ENCODE measurements at regions of chr10 and their contacts with region 1.

Region 1: DNA sequence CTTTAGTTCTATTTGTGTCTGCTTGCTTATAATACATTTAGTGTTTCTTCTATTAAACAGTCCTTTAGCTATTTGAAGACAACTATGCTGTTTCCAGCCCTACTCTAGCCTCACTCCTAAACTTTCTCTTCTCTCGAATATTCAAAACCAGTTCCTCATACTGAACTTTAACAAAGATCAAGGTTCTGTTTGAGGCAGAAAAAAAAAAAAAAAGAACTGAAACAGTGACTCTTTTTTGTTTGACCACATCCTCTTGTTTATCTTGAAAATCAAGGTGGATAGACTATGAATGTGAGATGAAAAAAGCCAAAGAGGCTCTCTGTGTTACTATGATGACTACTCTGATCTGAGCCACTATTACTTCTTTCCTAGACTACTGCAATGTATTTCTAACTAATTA is 154.3 kb downstream of the ZNF365 start:
- DNase-seq: no peak
- ATAC-seq: peak; percentile 59
- H3K4me3 Mint-ChIP-seq: peak overlapping the region; percentile 64
- H3K27ac Mint-ChIP-seq: peak overlapping the region; percentile 92
- H3K4me1 Mint-ChIP-seq: peaks cover 58% of the 10 kb centered on the region
- H3K27me3 Mint-ChIP-seq: no peaks in the 10 kb centered on the region
- CTCF ChIP-seq: no peak

Region 2: GRCh38 chr10:61894133-61894532 is 634.3 kb before region 1 on chr10:
- CTCF ChIA-PET with region 1: no interaction called
- POLR2A ChIA-PET with region 1: no interaction called
- intact Hi-C with region 1: no loop called
- DNase-seq: no peak
- ATAC-seq: no peak
- H3K4me3 Mint-ChIP-seq: no peak overlapping the region
- H3K27ac Mint-ChIP-seq: no peak overlapping the region
- H3K4me1 Mint-ChIP-seq: peaks cover 29% of the 10 kb centered on the region
- H3K27me3 Mint-ChIP-seq: no peaks in the 10 kb centered on the region
- CTCF ChIP-seq: no peak

Region 3: GRCh38 chr10:62016623-62017490 is 511.6 kb before region 1 on chr10:
- CTCF ChIA-PET with region 1: no interaction called
- POLR2A ChIA-PET with region 1: no interaction called
- intact Hi-C with region 1: loop called (anchors 5 kb)
- DNase-seq: peak; percentile 40
- ATAC-seq: peak; percentile 65
- H3K4me3 Mint-ChIP-seq: peak overlapping the region; percentile 66
- H3K27ac Mint-ChIP-seq: peak overlapping the region; percentile 96
- H3K4me1 Mint-ChIP-seq: peaks cover 84% of the 10 kb centered on the region
- H3K27me3 Mint-ChIP-seq: no peaks in the 10 kb centered on the region
- CTCF ChIP-seq: no peak

Region 4: DNA sequence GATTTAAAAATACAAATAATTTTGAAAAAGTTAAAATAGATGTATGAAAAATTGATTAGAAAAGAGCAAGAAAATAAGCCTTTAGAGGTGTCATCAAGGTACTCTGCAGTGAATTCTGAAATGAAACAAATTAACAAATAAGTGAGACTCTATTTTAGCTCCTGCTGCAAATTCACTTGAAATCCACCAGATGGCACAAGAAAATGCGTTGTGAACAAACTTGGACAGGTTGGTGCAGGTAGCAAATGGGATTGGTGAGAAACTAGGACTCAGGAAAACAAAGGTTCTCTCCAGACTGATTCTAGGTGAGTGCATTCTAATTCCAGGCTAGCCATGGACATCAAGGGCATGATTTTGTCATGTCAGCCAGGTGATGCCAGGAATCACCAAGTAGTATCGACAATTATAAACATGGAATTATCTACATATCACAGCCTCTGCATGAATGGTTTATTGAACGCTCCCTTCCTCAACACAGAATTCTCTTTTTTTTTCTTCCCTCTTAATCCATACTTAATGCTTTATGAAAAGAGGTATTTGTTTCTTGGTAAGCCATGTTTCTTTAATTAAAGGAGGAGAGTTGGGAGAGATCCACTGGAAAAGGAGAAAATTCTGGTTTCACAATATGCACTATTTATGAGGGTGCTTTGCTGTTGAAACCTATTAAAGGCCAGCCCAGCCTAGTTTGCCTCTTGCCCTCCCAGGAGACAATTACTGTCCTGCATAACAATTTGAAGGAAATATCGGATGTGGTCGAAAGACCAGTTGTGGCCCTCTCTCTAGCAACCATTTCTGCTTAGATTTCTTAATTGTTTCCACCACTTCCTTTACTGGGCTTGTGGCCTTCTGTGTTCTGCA is 36.2 kb before region 1 on chr10:
- CTCF ChIA-PET with region 1: interaction called, 10 read pairs
- POLR2A ChIA-PET with region 1: interaction called, 4 read pairs
- intact Hi-C with region 1: loop called (anchors 1 kb)
- DNase-seq: no peak
- ATAC-seq: peak; percentile 49
- H3K4me3 Mint-ChIP-seq: no peak overlapping the region
- H3K27ac Mint-ChIP-seq: no peak overlapping the region
- H3K4me1 Mint-ChIP-seq: peaks cover 27% of the 10 kb centered on the region
- H3K27me3 Mint-ChIP-seq: peaks cover 4% of the 10 kb centered on the region
- CTCF ChIP-seq: no peak

Region 5: DNA sequence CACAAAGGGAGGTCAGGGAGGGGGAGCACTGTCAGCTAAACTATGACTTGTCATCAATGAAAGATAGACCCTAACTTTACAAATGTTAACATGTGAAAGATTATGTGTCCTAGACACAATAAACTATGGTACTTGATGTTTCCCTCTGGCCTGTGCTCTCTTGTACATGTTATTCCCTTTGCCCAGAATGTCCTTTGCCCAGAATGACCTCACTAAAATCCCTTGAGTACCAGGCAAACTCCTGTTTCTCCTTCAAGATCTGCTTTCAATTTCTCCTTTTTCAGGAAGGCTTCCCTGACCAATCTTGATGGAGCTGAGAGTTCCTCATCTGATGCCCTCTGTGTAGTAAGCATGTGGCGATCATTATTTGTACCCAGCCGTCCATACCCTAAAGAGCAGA is 11.2 kb before region 1 on chr10:
- CTCF ChIA-PET with region 1: no interaction called
- POLR2A ChIA-PET with region 1: no interaction called
- intact Hi-C with region 1: loop called (anchors 1 kb)
- DNase-seq: no peak
- ATAC-seq: no peak
- H3K4me3 Mint-ChIP-seq: no peak overlapping the region
- H3K27ac Mint-ChIP-seq: no peak overlapping the region
- H3K4me1 Mint-ChIP-seq: peaks cover 9% of the 10 kb centered on the region
- H3K27me3 Mint-ChIP-seq: peaks cover 2% of the 10 kb centered on the region
- CTCF ChIP-seq: no peak

Region 6: GRCh38 chr10:62594093-62594520 is 65.7 kb after region 1 on chr10:
- CTCF ChIA-PET with region 1: interaction called, 5 read pairs
- POLR2A ChIA-PET with region 1: no interaction called
- intact Hi-C with region 1: loop called (anchors 5 kb)
- DNase-seq: peak; percentile 41
- ATAC-seq: peak; percentile 88
- H3K4me3 Mint-ChIP-seq: no peak overlapping the region
- H3K27ac Mint-ChIP-seq: no peak overlapping the region
- H3K4me1 Mint-ChIP-seq: peaks cover 16% of the 10 kb centered on the region
- H3K27me3 Mint-ChIP-seq: no peaks in the 10 kb centered on the region
- CTCF ChIP-seq: peak; percentile 74

Region 7: DNA sequence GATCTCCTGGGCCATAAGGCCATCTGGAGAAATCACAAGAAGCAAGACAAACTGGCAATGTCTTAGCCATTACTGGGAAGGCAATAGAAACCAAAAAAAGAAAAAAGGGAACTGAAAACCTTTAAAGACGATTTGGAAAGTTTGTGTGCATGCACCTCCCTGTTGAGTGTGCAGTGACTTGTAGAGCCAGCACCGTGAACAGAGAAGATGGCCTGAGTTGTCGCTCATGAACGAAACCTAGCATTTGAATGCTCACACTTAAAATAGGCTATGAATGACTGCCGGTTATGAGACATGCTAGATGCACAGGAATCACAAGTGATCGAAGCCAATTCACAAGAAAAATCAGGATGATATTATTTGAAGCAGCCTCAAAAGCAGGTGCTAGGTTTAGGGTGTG is 124.8 kb after region 1 on chr10:
- CTCF ChIA-PET with region 1: no interaction called
- POLR2A ChIA-PET with region 1: no interaction called
- intact Hi-C with region 1: loop called (anchors 1 kb)
- DNase-seq: no peak
- ATAC-seq: peak; percentile 92
- H3K4me3 Mint-ChIP-seq: peak overlapping the region; percentile 55
- H3K27ac Mint-ChIP-seq: peak overlapping the region; percentile 87
- H3K4me1 Mint-ChIP-seq: peaks cover 66% of the 10 kb centered on the region
- H3K27me3 Mint-ChIP-seq: peaks cover 1% of the 10 kb centered on the region
- CTCF ChIP-seq: no peak

Region 8: DNA sequence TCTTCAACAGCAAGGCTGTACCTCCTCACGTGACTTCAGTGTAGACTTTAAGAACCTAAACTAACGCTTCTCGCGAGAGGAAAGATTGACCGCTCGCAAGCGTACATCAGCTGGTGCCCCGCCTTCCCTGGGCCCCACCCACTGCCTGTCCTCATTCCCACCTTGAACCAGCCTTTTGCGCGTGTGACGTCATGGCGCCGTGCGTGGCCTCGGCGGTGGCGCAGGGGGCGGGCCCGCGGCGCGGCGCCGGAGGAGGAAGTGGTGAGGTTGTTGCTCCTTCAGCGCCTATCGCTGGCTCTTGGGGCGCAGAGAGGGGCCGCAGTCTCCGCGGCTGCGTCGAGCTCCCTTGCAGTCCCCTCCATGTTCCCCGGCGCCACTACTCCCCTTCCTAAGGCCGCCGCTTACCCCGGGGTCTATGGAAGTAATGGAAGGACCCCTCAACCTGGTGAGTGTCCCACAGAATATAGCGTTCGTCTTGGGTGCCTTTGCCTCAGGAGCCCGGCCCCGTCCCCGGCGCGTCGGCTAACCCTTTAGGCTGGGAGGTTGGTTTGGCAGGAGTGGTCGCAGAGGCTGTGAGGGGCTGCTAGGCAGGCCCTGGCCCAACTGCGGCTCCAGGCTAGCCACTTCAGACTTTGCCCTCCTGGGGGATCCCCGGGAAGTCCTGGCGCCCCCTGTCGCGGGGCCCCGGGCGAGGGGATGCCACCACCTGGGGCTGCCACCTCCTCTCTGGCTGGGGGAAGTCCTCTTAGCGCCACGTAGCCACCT is 604.8 kb after region 1 on chr10 and contains the start of gene NRBF2:
- CTCF ChIA-PET with region 1: no interaction called
- POLR2A ChIA-PET with region 1: interaction called, 7 read pairs
- intact Hi-C with region 1: loop called (anchors 2 kb)
- DNase-seq: peak; percentile 97
- ATAC-seq: peak; percentile 88
- H3K4me3 Mint-ChIP-seq: peak within 1 kb of the TSS; percentile 93
- H3K27ac Mint-ChIP-seq: peak within 1 kb of the TSS; percentile 92
- H3K4me1 Mint-ChIP-seq: peaks cover 44% of the 10 kb centered on the region
- H3K27me3 Mint-ChIP-seq: no peaks in the 10 kb centered on the region
- CTCF ChIP-seq: no peak
- total RNA-seq, gene NRBF2: 23.8 and 26.9 TPM in 2 replicates